GM18951 (cell line): ENCODE measurements at regions of chr17 and their contacts with region 1.

Region 1: DNA sequence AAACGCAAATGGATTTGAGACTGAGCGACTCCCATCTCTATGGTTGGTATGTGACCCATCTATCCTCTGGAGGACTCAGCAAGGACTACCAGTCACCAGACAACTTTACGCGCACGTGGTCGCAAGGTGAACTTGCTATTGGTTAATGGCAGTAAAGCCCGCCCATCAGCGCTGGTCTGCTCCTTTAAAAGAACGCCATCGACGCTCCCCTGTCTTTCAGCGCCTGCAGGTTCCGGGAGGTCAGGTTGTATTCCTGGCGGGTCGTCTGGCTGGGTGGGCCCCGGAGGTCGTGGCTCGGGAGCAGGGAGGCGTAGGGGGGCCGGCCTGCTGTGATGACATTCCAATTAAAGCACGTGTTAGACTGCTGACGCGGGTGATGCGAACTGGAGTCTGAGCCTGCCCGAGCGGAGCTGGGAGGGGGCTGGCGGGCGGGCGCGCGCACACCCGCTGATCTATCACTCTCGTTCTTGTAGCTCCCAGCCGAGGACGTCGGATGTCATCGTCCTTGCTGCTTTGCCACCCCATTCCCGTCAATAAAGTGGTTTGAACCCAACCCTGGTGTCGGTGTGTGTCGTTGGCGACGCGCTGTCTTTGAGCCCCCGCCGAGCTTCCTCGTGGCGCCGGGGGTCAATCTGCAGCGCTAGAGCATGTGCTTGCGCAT is 15.9 kb upstream of the ERN1 start:
- POLR2A ChIP-seq: peak; percentile 100

Region 2: DNA sequence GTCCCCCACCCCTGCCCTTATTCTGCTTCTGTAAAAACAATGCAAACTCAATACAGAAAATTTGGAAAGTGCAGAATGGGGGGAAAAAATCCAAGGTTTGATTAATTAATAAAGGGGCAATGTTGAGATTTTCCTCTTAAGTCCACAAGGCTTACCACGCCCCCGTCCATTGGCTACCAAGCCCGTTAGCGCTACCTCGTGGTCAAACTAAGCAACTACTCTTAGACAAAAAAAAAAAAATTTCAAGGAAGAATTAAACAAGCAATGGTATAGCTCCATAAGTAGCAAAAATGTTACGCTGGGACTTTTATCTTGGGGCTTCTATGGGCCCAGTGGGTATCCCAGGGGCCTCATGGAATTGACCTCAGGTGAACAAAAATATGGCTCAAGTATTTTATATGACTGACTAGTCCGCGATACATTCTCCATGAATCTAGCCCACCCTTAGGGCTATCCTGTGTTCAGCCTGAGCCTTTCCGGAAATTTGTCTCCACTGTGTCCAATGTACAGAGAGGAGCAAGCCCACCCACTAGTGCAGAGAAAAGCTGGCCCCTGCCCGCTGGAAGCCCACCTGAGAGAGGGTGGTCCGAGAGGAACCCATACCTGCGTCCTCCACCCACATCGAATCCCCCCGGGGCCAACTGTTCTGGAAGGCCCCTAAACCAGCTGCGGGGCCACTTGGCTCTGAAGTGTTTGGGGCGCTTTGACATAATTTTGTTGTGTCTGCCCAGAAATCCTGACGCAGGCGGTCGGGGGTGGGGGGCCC is 136.3 kb after region 1 on chr17:
- in situ Hi-C with region 1: loop called (anchors 10 kb)
- POLR2A ChIP-seq: no peak